Left ventricle myocardium inferior (tissue), 1 donor: ENCODE measurements at regions of chr16 and their contacts with region 1.

Region 1: DNA sequence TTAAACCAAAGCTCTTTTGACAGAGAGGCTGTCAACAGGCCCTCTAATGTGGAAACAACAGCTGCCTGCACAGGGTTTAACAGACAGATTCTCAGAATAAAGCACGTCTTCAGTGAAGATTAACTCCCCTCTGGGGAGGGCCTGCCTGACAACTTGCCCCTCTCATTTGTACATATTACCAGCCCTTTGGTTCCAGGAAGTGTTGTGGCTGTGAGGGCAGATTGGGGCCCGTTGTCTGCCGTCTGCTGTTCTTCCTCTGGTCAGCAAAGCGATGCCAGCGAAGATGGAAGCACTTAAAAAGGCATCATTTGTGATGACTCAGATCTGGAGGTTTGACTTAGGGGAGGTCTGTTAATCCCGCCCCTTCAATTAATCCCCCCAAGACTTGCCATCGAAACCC is 177.0 kb upstream of the IRX6 start:
- DNase-seq: no peak
- H3K4me3 ChIP-seq: no peak overlapping the region
- H3K27ac ChIP-seq: no peak overlapping the region
- H3K4me1 ChIP-seq: no peaks in the 10 kb centered on the region
- H3K27me3 ChIP-seq: peaks cover 24% of the 10 kb centered on the region
- CTCF ChIP-seq: no peak

Region 2: GRCh38 chr16:53773150-53773846 is 1373.7 kb before region 1 on chr16:
- intact Hi-C with region 1: loop called (anchors 10 kb)
- DNase-seq: no peak
- H3K4me3 ChIP-seq: no peak overlapping the region
- H3K27ac ChIP-seq: peak overlapping the region; percentile 66
- H3K4me1 ChIP-seq: peaks cover 89% of the 10 kb centered on the region
- H3K27me3 ChIP-seq: no peaks in the 10 kb centered on the region
- CTCF ChIP-seq: peak; percentile 77

Region 3: DNA sequence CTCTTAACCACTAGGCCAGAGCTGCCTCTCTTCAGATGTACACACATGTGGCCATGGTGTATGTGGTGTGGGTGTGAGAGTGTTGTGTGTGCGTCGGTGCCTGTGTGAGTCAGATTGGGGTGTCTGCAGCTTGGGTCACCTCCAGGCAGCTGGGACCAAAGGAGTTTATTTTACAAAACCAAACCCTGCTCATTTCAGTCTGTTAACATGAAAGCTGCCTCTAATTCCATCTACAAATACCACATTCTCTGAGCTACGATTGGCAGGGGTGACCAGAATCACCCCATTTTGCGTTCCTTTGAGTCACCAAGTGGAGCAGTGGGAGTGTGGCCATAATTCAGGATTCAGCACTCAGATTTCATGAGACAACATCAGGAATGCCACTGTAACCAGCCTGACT is 111.0 kb before region 1 on chr16:
- intact Hi-C with region 1: no loop called
- DNase-seq: no peak
- H3K4me3 ChIP-seq: no peak overlapping the region
- H3K27ac ChIP-seq: no peak overlapping the region
- H3K4me1 ChIP-seq: no peaks in the 10 kb centered on the region
- H3K27me3 ChIP-seq: peaks cover 34% of the 10 kb centered on the region
- CTCF ChIP-seq: no peak